Activated B cell treated with CpG ODN at 0.5 μM for 24 hours (primary cell): ENCODE measurements at regions of chr18 and their contacts with region 1.

Region 1: DNA sequence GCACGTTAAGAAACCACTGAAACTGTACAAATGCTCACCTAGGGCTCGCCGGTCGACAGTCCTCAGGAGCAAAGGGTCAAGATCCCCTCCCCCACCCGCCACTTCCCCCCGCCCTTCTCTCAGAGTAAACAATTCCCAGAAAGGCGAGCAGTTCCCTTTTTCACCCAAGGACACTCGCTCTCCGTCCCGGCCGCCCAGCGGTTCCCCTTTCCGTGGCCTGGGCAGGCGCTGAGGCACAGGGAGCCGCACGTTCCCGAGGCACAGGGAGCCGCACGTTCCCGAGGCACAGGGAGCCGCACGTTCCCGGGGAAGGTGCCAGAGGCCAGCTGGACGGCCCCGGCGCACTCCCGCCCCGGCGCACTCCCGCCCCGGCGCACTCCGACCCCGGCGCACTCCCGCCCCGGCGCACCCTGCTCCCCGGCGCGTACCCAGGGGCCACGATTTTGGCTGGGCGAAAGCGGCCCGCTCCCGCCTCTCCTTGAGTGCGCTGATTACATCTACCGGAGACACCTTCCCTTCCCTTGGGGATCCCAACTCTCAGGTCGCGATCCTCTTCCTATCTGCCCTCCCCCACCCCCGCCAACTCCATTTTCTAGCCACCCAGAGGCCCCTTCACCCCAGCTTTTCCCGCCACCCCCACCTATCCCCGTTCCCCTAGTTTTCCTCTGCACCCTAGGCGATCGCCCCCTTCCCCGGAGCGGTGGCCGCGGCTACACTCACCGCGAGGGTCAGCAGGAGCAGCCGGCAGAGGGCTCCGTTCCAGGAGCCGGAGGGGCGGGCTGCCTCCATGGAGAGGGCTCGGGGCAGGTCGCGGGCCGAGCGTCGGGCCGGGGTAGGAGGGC is 817 bp downstream of the DSC2 start:
- DNase-seq: no peak
- ATAC-seq: no peak
- H3K4me3 Mint-ChIP-seq: no peak overlapping the region
- H3K27ac Mint-ChIP-seq: no peak overlapping the region
- H3K4me1 Mint-ChIP-seq: no peaks in the 10 kb centered on the region
- H3K27me3 Mint-ChIP-seq: peaks cover 7% of the 10 kb centered on the region
- CTCF ChIP-seq: no peak

Region 2: GRCh38 chr18:31042437-31043181 is 58.8 kb before region 1 on chr18 and contains the start of gene DSC3:
- CTCF ChIA-PET with region 1: no interaction called
- POLR2A ChIA-PET with region 1: no interaction called
- intact Hi-C with region 1: loop called (anchors 10 kb)
- DNase-seq: no peak
- ATAC-seq: no peak
- H3K4me3 Mint-ChIP-seq: no peak within 1 kb of the TSS
- H3K27ac Mint-ChIP-seq: no peak within 1 kb of the TSS
- H3K4me1 Mint-ChIP-seq: no peaks in the 10 kb centered on the region
- H3K27me3 Mint-ChIP-seq: peaks cover 26% of the 10 kb centered on the region
- CTCF ChIP-seq: no peak
- total RNA-seq, gene DSC3: not detected in 2 replicates